CD4-positive, alpha-beta memory T cell (primary cell): ENCODE measurements at regions of chr6 and their contacts with region 1.

Region 1: GRCh38 chr6:43391440-43392031 is 22.1 kb upstream of the ZNF318 start:
- DNase-seq: peak; percentile 44 to 73 (median 53)
- H3K4me3 ChIP-seq: peak overlapping the region in 1 of 2 donors; percentile 29
- H3K4me3 Mint-ChIP-seq: peak overlapping the region; percentile 12 to 92 (median 82)
- H3K27ac ChIP-seq: no peak overlapping the region
- H3K27ac Mint-ChIP-seq: peak overlapping the region; percentile 29 to 88 (median 65)
- H3K4me1 ChIP-seq: peaks cover 30% of the 10 kb centered on the region
- H3K4me1 Mint-ChIP-seq: peaks cover 24 to 48% (median 34%) of the 10 kb centered on the region in 4 donors
- H3K27me3 ChIP-seq: no peaks in the 10 kb centered on the region
- H3K27me3 Mint-ChIP-seq: peaks cover 0 to 8% of the 10 kb centered on the region in 2 donors

Region 2: DNA sequence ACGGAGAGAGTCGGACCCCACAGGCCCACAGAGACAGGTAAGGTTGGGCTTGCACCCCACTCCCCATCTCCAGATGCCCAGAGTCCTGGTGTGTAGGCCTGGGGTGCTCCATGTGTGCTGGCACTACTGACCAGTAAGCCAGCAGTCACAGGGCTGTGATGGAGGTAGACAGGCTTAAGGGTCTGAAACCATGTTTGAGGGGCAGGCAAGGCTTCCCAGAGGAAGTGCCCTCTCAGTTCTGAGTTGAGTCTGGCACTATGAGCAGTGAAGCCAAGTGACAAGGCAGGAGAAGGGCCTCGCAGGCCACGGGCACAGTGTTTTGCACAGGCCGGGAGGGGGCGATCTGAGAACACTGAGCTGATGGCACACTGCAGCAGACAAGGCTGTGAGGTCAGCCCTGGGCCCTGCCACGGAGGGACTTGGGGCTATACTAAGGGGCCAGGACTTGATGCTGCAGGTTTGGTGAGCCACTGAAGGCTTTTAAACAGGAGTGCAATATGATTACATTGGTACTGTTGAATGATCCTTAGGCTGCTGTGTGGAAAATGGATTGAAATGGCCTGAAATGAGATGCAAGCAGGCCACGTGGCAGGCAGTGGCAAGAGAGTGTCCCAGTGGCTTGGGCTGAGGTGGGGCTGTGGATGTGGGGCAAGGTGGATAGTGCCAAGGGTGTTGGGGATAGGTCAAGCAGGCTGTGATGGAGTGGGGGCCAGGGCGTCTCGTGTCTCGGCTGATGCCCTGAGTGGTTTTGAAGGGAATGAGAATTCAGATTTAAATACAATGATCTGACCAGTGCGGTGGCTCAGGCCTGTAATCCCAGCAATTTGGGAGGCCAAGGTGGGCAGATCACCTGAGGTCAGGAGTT is 128.0 kb before region 1 on chr6:
- CTCF ChIA-PET with region 1: interaction called, 70 read pairs
- POLR2A ChIA-PET with region 1: no interaction called
- intact Hi-C with region 1: no loop called
- DNase-seq: peak; percentile 65 to 71 (median 66)
- H3K4me3 ChIP-seq: no peak overlapping the region
- H3K4me3 Mint-ChIP-seq: peak overlapping the region in 1 of 8 donors; percentile 9
- H3K27ac ChIP-seq: no peak overlapping the region
- H3K27ac Mint-ChIP-seq: no peak overlapping the region
- H3K4me1 ChIP-seq: peaks cover 6% of the 10 kb centered on the region
- H3K4me1 Mint-ChIP-seq: peaks cover 0 to 4% (median 2%) of the 10 kb centered on the region in 4 donors
- H3K27me3 ChIP-seq: no peaks in the 10 kb centered on the region
- H3K27me3 Mint-ChIP-seq: peaks cover 0 to 1% of the 10 kb centered on the region in 2 donors

Region 3: DNA sequence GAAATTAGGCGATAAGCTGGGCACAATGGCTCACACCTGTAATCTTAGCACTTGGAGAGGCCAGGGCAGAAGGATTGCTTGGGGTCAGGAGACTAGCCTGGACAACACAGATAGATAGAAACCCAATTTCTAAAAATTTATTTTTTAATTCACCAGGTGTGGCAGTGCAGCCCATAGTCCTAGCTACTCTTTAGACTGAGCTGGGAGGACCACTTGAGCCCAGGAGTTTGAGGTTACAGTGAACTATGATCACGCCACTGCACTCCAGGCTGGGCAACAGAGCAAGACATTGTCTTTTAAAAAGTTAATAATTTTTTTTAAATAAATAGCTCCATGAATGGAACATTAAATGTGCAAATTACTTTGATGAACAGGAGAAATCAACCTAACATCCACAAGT is 30.3 kb before region 1 on chr6:
- CTCF ChIA-PET with region 1: interaction called, 11 read pairs
- POLR2A ChIA-PET with region 1: interaction called, 3 read pairs
- intact Hi-C with region 1: no loop called
- DNase-seq: no peak
- H3K4me3 ChIP-seq: no peak overlapping the region
- H3K4me3 Mint-ChIP-seq: no peak overlapping the region
- H3K27ac ChIP-seq: no peak overlapping the region
- H3K27ac Mint-ChIP-seq: no peak overlapping the region
- H3K4me1 ChIP-seq: peaks cover 8% of the 10 kb centered on the region
- H3K4me1 Mint-ChIP-seq: peaks cover 21 to 46% (median 35%) of the 10 kb centered on the region in 4 donors
- H3K27me3 ChIP-seq: no peaks in the 10 kb centered on the region
- H3K27me3 Mint-ChIP-seq: no peaks in the 10 kb centered on the region